ENCODE measurements at regions of chr22 and their contacts with region 1.

Region 1: GRCh38 chr22:50620593-50621355 is 7.2 kb downstream of the ARSA start:
- DNase-seq: no peak
- H3K4me3 ChIP-seq: no peak overlapping the region
- CTCF ChIP-seq: no peak

Region 2: DNA sequence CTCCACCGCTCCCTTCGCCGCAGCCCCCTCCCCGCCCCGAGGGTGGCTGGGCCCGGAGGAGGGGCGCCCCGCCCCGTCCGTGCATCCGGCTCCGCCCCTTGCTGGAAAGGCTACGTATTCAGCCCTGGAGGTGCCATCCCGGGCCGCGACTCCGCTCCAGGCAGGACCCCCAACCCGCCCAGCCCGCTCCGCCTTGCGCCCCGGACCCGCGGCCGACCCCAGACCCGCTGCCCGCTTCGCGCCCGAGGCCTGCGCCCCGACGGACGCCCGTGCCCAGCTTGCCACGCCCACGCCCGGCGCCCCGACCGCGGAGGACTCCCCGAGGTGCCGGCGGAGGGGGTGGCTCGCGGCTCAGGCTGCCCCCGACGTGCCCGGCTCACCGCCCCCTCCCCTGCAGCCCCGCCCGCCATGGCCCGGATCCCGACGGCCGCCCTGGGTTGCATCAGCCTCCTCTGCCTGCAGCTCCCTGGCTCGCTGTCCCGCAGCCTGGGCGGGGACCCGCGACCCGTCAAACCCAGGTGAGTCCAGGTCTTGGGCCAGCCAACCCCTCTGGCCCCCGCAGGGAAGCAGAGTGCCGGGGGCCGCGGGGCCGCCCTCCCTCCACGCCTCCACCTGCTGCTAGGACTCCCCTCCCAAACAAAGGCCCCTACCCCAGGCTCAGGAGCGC is 139.2 kb before region 1 on chr22 and contains the start of gene ADM2:
- CTCF ChIA-PET with region 1: no interaction called
- POLR2A ChIA-PET with region 1: no interaction called
- DNase-seq: no peak
- H3K4me3 ChIP-seq: peak within 1 kb of the TSS; percentile 70
- CTCF ChIP-seq: no peak

Region 3: GRCh38 chr22:50544078-50544745 is 76.6 kb before region 1 on chr22:
- CTCF ChIA-PET with region 1: interaction called, 10 read pairs
- POLR2A ChIA-PET with region 1: no interaction called
- DNase-seq: no peak
- H3K4me3 ChIP-seq: peak overlapping the region; percentile 27
- CTCF ChIP-seq: peak; percentile 77

Region 4: GRCh38 chr22:50576070-50576469 is 44.7 kb before region 1 on chr22:
- CTCF ChIA-PET with region 1: interaction called, 13 read pairs
- POLR2A ChIA-PET with region 1: no interaction called
- DNase-seq: no peak
- H3K4me3 ChIP-seq: no peak overlapping the region
- CTCF ChIP-seq: peak; percentile 25

Region 5: GRCh38 chr22:50641696-50642607 is 21.2 kb after region 1 on chr22:
- CTCF ChIA-PET with region 1: interaction called, 10 read pairs
- POLR2A ChIA-PET with region 1: no interaction called
- DNase-seq: no peak
- H3K4me3 ChIP-seq: no peak overlapping the region
- CTCF ChIP-seq: peak; percentile 11

Region 6: DNA sequence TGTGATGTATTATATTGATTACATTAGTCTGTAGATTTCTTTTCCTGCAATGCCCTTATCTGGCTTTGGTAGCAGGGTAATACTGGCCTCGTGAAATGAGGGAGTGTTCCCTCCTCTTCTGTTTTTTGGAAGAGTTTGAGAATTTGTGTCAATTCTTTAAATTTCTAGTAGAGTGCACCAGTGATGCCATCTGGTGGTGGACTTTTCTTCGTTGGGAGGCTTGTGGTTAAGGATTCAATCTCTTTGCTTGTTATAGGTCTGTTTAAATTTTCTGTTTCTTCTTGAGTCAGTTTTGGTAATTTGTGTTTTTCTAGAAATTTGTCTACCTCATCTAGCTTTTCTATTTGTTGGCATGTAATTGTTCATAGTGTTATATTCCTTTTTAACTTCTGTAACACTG is 70.7 kb after region 1 on chr22:
- CTCF ChIA-PET with region 1: interaction called, 16 read pairs
- POLR2A ChIA-PET with region 1: no interaction called
- DNase-seq: no peak
- H3K4me3 ChIP-seq: no peak overlapping the region
- CTCF ChIP-seq: peak; percentile 20